ENCODE measurements at regions of chr19 and their contacts with region 1.

Region 1: DNA sequence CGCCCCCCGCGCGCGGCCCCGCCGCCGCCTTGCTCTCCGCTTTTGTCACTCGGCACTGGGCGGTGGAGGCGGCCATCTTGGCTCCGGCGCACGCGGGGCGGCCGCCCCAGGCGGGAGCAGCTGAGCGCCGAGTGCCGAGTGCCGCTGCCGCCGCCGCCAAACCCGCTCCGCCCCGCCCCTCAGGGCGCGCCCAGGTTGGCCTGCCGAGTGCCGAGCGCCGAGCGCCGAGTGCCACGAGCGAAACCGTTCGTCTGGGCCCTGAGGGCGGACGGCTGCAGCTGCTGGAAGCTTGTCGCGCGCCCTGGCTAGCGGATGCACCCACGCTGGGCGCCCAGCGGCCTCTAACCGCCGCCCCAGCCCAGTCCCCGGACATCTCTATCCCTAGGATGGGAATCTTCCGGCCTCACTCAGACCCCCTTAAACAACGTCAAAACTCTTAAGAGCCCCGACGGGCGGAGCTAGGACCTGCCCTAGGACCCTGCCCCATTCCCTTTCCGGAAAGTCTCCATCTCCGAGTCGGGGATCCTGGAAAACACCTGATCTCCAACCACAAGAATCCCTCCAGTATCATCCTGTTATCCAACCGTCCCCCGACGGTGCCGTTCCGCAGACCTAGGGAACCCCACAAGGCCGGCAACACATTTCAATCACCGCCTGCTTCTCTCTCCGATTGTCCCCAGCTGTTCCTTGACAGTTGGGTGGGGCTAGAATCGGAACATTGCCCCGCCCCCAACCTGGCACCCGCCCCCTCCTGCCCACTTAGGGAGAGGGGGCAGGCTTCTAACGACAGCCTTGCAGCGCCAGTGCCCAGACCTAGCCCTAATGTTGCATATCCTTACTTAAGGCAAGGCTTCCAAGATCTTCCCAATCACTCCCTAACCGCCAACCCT is 14.1 kb upstream of the AKAP8L start:
- DNase-seq: peak; percentile 78 to 92
- H3K4me3 ChIP-seq: peak overlapping the region; percentile 87 to 98 (median 96)
- H3K27ac ChIP-seq: peak overlapping the region; percentile 54 to 62
- H3K4me1 ChIP-seq: peaks cover 9 to 15% of the 10 kb centered on the region in 2 donors
- H3K27me3 ChIP-seq: no peaks in the 10 kb centered on the region
- CTCF ChIP-seq: no peak
- POLR2A ChIP-seq: no peak

Region 2: GRCh38 chr19:14571695-14572490 is 861.0 kb before region 1 on chr19 and contains the start of gene NDUFB7:
- intact Hi-C with region 1: loop called (anchors 5 kb)
- DNase-seq: peak; percentile 87 to 89
- H3K4me3 ChIP-seq: peak within 1 kb of the TSS; percentile 84 to 97 (median 89)
- H3K27ac ChIP-seq: peak within 1 kb of the TSS; percentile 71 to 79
- H3K4me1 ChIP-seq: peaks cover 5 to 12% of the 10 kb centered on the region in 2 donors
- H3K27me3 ChIP-seq: no peaks in the 10 kb centered on the region
- CTCF ChIP-seq: peak; percentile 55 to 80 (median 66)
- POLR2A ChIP-seq: no peak
- total RNA-seq, gene NDUFB7: 283 to 388 (median 299) TPM

Measured in breast epithelium (tissue), 4 donors.